Activated B cell treated with CpG ODN at 0.5 μM for 24 hours (primary cell): ENCODE measurements at regions of chr9 and their contacts with region 1.

Region 1: DNA sequence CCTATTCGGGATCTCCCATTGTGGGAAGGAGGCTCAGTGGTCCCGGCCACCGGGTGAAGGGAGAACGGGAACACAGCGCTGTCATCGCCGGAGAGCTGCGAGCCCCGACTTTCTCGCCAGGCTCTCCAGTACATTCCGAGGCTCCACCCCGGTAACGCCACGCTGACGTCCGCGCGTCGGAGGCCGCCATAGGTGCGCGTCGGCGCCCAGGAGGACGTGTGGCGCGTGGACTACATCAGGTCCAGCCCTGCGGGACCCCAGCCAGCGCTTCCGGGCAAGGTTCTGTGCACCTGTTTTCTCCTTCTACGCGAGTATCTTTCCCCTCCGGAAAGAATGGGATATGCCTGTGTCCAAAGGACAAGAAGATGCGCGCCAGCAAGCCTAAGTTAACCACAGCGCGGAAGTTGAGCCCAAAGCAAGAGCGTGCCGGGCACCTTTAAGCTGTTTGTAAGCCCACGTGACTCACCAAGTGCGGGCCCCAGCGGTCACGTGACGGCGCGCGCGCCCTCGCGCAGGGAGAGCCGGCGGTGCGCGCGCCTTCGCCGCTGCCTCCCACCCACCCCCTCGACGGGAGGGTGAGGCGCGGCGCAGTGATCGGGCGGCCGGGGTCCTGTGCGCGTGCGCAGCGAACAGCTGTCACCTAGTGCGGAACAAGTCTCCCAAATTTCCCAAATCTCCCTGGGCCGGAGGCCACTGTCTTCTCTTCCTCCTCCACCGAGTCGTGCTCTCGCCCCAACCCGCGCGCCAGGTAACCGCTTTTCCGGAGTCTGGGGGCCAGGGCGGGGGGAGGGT is at the start of gene KDM4C:
- DNase-seq: peak; percentile 92
- ATAC-seq: peak; percentile 75
- H3K4me3 Mint-ChIP-seq: peak within 1 kb of the TSS; percentile 99
- H3K27ac Mint-ChIP-seq: peak within 1 kb of the TSS; percentile 100
- H3K4me1 Mint-ChIP-seq: peaks cover 39% of the 10 kb centered on the region
- H3K27me3 Mint-ChIP-seq: no peaks in the 10 kb centered on the region
- CTCF ChIP-seq: no peak
- total RNA-seq, gene KDM4C: 90.7 and 113 TPM in 2 replicates

Region 2: DNA sequence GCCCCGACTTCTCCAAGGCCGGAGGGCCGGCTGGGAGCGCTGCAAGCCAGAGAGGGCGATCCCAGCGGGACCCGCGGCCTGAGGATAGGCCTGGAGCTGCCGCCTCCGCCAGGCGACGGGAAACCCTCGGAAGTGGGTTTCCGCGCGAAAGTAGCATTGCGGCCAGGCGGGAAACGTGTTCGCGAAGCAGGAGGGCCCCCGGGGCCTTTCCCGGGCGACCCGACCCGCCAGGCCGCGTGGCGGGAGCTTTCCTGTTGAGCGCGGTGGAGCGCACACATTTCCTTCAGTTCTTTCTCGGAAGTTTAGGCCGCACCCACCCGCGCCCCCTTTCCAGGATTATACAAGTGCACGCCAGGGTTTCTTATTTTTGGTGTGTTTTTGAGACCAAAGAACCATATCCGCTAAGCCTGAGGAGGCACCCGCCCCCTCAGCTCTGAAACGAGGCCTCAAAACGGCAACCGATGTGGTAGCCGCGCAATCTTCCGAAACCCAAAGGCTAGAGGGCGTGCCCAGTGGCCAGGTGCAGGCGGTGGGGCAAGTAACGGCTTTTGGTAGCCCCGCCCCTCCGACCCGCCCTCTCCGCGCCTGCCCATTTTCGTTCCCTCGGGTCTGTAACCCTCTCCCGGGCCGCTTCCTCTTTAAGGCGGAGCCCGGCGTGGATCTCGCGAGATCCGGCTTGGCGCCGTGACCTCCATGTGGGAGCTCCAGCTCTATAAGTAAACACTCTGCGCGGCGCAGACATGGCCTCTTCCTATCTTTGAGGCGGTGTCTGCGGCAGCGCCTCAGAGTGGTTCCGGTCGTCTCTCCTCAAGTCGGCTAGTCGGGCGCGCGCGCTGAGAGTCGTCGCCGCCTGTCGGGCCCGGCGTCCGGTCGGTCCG is 344.9 kb before region 1 on chr9 and contains the start of gene UHRF2:
- CTCF ChIA-PET with region 1: no interaction called
- POLR2A ChIA-PET with region 1: interaction called, 84 read pairs
- intact Hi-C with region 1: loop called (anchors 1 kb)
- DNase-seq: peak; percentile 95
- ATAC-seq: peak; percentile 87
- H3K4me3 Mint-ChIP-seq: peak within 1 kb of the TSS; percentile 82
- H3K27ac Mint-ChIP-seq: peak within 1 kb of the TSS; percentile 96
- H3K4me1 Mint-ChIP-seq: peaks cover 61% of the 10 kb centered on the region
- H3K27me3 Mint-ChIP-seq: no peaks in the 10 kb centered on the region
- CTCF ChIP-seq: no peak
- total RNA-seq, gene UHRF2: 81.1 and 114 TPM in 2 replicates

Region 3: DNA sequence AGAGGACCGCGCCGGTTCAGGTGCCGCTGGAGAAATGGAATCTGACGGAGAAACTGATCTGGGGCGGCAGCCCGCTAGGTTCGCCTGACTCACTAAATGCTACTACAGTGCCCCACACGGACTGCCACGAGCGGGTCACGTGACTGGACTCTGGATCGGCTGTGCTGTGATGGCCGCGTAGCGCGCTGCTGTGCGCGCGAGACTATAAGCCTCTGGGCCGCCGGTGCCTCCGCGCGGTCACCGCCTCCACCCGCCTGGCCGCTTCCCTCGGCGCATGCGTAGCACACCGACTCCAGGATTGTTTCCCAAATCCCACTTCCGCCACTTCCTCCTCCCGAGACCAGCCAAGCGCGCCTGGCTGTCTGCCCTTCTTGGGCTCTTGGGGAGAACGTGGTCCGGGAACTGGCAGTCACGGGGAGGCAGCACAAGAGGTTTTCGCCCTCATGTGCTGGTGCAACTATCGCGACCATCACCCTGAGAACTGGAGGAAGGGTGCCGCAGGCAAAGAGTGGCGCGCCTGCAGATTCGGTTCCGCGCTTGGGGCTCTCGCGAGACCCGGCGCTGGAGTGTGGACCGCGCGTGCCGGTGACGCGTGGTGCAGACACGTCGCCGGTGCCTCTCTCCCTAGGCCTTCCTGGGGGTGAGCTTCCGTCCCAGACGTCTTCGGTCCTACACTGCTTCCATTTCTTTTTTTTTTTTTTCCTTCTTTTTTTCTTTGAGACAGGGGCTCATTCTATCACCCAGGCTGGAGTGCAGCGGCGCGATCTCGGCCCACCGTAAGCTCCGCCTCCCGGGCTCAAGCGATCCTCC is 76.3 kb before region 1 on chr9:
- CTCF ChIA-PET with region 1: interaction called, 6 read pairs
- POLR2A ChIA-PET with region 1: interaction called, 853 read pairs
- intact Hi-C with region 1: loop called (anchors 1 kb)
- DNase-seq: peak; percentile 85
- ATAC-seq: peak; percentile 74
- H3K4me3 Mint-ChIP-seq: peak overlapping the region; percentile 97
- H3K27ac Mint-ChIP-seq: peak overlapping the region; percentile 100
- H3K4me1 Mint-ChIP-seq: peaks cover 44% of the 10 kb centered on the region
- H3K27me3 Mint-ChIP-seq: no peaks in the 10 kb centered on the region
- CTCF ChIP-seq: no peak

Region 4: DNA sequence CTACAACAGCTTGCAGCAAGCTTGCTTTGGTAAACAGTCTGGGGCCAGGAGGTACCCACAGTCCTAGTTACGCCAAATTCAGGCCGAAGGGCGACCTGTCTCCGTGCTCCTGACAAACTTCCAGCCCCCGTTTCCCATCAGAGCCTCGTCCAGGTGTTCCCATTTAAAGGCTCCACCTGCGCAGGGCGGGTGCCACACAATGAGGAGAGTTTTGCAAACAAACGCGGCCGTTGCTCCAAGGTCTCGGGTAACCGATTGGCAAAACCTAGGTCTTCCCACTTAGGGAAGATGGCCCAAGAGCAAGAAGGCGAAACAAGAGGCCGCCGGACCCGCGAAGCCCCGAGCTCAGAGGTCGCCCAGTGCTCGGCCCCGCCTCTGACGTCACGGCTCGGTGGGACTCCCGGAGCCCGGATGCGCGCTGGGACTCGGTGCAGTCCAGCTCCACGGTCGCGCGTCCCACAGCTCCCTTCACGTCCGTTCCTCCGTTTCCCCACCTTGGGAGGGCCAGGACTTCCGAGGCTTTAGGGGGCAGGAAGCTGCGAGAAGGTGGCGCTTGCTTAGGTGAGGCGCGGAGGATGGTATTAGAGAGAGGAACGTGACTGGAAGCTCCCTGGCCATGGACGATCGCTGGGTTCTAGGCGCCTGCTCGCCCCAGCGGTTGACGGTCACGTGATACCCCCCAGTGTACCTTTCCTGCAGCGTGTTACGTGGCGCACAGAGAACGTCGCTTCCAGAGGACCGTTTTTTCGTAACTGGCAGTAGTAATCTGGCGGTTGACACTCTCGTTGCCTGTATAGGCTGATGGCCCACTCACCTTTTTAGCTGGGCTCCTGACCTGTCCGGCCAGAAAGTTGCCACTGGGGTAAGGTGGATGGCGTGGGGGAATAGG is 41.7 kb before region 1 on chr9:
- CTCF ChIA-PET with region 1: no interaction called
- POLR2A ChIA-PET with region 1: interaction called, 62 read pairs
- intact Hi-C with region 1: loop called (anchors 2 kb)
- DNase-seq: peak; percentile 71
- ATAC-seq: peak; percentile 86
- H3K4me3 Mint-ChIP-seq: peak overlapping the region; percentile 90
- H3K27ac Mint-ChIP-seq: peak overlapping the region; percentile 92
- H3K4me1 Mint-ChIP-seq: peaks cover 13% of the 10 kb centered on the region
- H3K27me3 Mint-ChIP-seq: no peaks in the 10 kb centered on the region
- CTCF ChIP-seq: no peak

Region 5: GRCh38 chr9:6818320-6818922 is 60.8 kb after region 1 on chr9:
- CTCF ChIA-PET with region 1: no interaction called
- POLR2A ChIA-PET with region 1: interaction called, 15 read pairs
- intact Hi-C with region 1: no loop called
- DNase-seq: no peak
- ATAC-seq: no peak
- H3K4me3 Mint-ChIP-seq: no peak overlapping the region
- H3K27ac Mint-ChIP-seq: peak overlapping the region; percentile 39
- H3K4me1 Mint-ChIP-seq: peaks cover 49% of the 10 kb centered on the region
- H3K27me3 Mint-ChIP-seq: no peaks in the 10 kb centered on the region
- CTCF ChIP-seq: no peak

Region 6: DNA sequence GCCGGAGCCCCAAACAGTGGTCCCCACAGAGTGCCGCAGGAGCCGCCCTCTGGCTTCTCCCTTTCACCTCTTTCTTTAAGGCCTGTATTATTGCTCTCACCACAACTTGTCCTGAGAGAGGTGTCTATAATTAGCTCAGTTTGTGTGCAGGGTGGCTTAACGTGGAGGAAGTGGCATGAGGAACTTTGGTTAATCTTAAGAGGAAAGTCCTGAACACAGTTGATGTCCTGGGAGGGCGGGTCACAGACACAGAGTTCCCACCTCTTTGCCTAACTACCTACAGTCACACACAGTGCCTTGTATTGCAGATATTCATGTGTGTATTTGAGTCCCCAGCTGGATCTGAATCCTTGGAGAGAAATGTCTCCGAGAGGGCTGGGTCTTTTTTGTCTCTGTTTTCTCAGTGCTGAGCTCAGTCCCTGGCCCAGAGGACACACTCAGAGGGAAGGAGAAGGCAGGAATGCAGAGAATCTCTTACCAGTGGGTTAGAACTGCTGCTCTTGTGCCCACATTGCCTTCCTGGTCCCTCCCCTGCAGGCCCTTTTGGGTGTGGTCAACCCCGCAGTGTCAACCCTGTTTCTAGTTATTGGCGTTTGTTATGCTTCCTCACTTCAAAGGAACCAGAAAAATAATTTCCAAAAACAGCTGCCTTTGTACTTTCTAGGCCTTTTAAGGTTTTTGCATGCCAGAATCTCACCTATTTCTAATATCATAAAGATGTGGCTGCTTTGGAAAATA is 392.7 kb after region 1 on chr9:
- CTCF ChIA-PET with region 1: no interaction called
- POLR2A ChIA-PET with region 1: no interaction called
- intact Hi-C with region 1: no loop called
- DNase-seq: no peak
- ATAC-seq: no peak
- H3K4me3 Mint-ChIP-seq: no peak overlapping the region
- H3K27ac Mint-ChIP-seq: peak overlapping the region; percentile 18
- H3K4me1 Mint-ChIP-seq: peaks cover 24% of the 10 kb centered on the region
- H3K27me3 Mint-ChIP-seq: no peaks in the 10 kb centered on the region
- CTCF ChIP-seq: no peak